GM10248 (cell line): ENCODE measurements at regions of chr4 and their contacts with region 1.

Region 1: DNA sequence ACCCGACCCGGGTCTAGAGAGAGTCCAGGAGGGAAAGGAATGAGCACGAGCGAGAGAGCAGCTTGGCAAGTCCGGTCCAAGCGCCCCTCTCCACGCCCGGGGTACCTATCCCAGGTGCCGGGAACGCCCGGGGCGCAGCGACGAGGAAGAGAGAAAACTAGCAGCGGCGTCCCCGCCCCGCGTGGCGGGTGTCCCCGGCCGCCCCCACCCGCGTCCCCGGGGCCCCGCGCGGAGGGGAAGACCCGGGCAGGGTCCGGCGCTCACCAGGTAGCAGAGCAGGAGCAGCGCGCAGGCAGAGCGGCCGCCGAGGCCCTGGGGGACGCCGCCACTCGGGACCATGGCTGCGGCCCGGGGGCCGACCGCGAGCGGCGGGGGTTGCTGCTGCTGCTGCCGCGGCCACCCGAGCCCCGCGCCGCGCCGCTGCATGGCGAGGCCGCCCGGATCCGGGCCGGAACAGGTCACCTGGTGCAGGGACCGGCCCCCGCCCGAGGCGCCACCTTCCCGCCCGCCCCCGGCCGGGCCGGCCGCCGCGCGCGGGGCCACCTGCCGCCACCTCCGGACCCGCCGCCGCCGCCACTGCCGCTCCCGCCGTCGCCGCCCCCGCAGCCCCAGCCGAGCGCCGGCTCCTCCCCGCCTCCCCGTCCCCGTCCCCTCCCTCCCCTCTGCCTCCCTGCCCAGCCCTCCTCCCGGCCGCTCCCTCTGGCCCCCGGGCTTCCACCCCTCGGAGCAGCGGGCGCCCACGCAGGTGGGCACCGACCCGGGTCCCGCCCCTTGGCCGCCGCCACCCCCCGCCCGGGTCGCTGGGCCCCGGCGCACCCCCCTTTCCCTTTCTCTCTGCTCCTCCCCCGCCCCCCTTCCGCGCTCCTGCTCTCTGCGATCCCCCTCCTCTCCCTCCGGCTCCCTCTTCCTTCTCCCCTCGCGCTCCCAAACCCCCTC is at the start of gene SEL1L3:
- DNase-seq: peak; percentile 83
- CTCF ChIP-seq: no peak

Region 2: DNA sequence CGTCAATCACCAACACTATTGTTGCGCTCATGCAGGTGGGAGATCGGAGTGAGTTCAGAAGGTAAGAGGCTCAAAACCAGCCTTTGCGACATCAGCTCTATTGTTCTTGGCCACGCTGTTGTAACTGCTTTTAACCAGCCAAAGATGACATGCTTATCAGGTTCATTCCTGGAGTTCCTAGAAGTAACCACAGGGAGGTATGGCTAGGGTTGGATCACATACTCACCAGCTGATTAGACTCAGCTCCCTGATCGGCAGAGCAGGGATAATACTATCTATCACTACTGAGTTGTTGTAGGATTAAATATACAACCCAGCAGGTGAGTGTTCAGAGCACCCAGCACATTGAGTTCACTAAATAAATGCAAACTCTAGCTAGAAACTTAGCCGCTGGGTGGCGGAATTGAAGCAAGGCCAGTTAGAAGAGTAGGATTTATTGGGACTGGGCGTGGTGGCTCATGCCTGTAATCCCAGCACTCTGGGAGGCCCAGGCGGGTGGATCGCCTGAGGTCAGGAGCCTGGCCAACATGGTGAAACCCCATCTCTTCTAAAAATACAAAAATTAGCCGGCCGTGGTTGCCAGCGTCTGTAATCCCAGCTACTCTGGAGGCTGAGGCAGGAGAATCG is 194.6 kb before region 1 on chr4:
- CTCF ChIA-PET with region 1: no interaction called
- POLR2A ChIA-PET with region 1: no interaction called
- DNase-seq: no peak
- CTCF ChIP-seq: no peak

Region 3: DNA sequence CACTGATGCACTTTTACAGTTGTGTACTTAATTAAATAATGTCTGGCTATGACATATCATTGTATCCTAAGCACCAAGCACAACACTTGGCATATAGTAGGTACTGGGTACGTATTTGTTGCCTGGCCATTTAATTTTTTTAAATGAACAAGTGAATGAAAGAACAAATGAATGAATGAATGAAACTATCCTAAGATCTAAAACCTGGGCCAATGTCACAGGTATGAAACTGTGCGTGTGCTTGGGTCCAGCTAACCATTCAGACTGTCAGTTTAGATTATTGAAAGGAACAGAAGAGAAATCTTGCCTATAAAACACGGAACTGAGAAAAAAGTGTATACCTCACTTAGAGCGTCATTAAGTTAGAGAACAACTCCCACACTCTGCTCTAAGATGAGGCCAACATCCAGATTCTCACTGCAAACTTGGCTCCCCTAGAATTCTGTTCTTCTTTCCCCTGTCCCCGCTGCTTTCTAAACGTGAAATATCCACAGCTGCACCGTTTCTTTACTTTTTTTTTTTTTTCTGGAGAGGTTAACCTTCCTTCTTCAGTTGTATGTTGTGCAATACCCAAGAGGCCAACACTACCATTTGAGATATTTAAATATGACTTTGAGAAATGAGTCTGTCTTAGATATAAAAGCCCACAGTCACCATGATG is 17.4 kb after region 1 on chr4:
- CTCF ChIA-PET with region 1: interaction called, 27 read pairs
- POLR2A ChIA-PET with region 1: interaction called, 4 read pairs
- DNase-seq: peak; percentile 62
- CTCF ChIP-seq: no peak